ENCODE measurements at regions of chr10 and their contacts with region 1.

Region 1: GRCh38 chr10:119502209-119502608 is 40.3 kb downstream of the RGS10 start:
- DNase-seq: peak; percentile 64 to 97 (median 88)
- ATAC-seq: peak; percentile 82
- H3K4me3 ChIP-seq: peak overlapping the region; percentile 0 to 18
- H3K4me3 Mint-ChIP-seq: peak overlapping the region; percentile 79
- H3K27ac ChIP-seq: peak overlapping the region; percentile 73 to 77
- H3K27ac Mint-ChIP-seq: peak overlapping the region; percentile 99
- H3K4me1 ChIP-seq: peaks cover 94% of the 10 kb centered on the region
- H3K4me1 Mint-ChIP-seq: peaks cover 91% of the 10 kb centered on the region
- H3K27me3 ChIP-seq: no peaks in the 10 kb centered on the region
- H3K27me3 Mint-ChIP-seq: no peaks in the 10 kb centered on the region
- CTCF ChIP-seq: no peak

Region 2: DNA sequence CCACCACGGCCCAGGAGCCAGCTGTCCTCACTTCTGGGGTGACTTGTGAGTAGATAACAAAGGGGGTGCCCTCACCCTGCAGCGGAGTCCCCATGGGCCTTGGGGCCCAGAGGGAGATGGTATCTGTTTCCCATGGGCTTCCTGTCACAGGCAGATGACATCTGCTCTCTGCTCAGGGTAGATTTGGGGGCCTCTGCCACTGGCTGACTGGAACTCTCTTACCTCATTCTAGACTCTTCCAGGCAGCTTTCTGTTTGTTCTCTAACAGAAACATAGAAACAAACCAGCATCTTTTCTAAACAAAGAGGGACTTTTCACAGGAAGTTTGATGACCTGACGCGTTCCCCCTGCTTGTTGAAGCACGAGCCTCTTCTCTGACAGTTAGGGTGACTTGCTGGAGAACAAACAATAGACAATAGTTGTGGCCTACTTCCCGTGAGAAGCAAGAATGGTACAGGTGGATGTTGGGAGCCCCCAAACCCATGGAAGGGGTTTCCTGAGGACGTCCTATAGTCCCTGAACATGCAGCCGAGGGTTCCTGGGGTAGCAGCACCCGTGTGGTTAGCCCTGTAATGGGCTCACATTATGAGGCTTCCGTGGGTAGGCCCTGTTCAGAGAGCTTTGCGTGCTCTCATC is 233.2 kb before region 1 on chr10:
- CTCF ChIA-PET with region 1: no interaction called
- POLR2A ChIA-PET with region 1: no interaction called
- intact Hi-C with region 1: loop called in 1 of 2 experiments (anchors 5 kb)
- DNase-seq: peak; percentile 45 to 97 (median 75)
- ATAC-seq: peak; percentile 90
- H3K4me3 ChIP-seq: no peak overlapping the region
- H3K4me3 Mint-ChIP-seq: peak overlapping the region; percentile 33
- H3K27ac ChIP-seq: peak overlapping the region; percentile 68 to 100
- H3K27ac Mint-ChIP-seq: peak overlapping the region; percentile 97
- H3K4me1 ChIP-seq: peaks cover 42% of the 10 kb centered on the region
- H3K4me1 Mint-ChIP-seq: peaks cover 52% of the 10 kb centered on the region
- H3K27me3 ChIP-seq: no peaks in the 10 kb centered on the region
- H3K27me3 Mint-ChIP-seq: no peaks in the 10 kb centered on the region
- CTCF ChIP-seq: no peak

Region 3: GRCh38 chr10:119480667-119481066 is 21.5 kb before region 1 on chr10:
- CTCF ChIA-PET with region 1: no interaction called
- POLR2A ChIA-PET with region 1: no interaction called
- intact Hi-C with region 1: no loop called
- DNase-seq: no peak
- ATAC-seq: no peak
- H3K4me3 ChIP-seq: no peak overlapping the region
- H3K4me3 Mint-ChIP-seq: no peak overlapping the region
- H3K27ac ChIP-seq: no peak overlapping the region
- H3K27ac Mint-ChIP-seq: no peak overlapping the region
- H3K4me1 ChIP-seq: peaks cover 23% of the 10 kb centered on the region
- H3K4me1 Mint-ChIP-seq: peaks cover 27% of the 10 kb centered on the region
- H3K27me3 ChIP-seq: no peaks in the 10 kb centered on the region
- H3K27me3 Mint-ChIP-seq: no peaks in the 10 kb centered on the region
- CTCF ChIP-seq: no peak

Region 4: GRCh38 chr10:119517235-119518141 is 15.3 kb after region 1 on chr10:
- CTCF ChIA-PET with region 1: interaction called, 11 read pairs
- POLR2A ChIA-PET with region 1: interaction called, 12 read pairs
- intact Hi-C with region 1: loop called (anchors 1 kb)
- DNase-seq: peak in 6 of 9 experiments; percentile 57 to 74 (median 64)
- ATAC-seq: peak; percentile 24
- H3K4me3 ChIP-seq: peak overlapping the region; percentile 2 to 11
- H3K4me3 Mint-ChIP-seq: peak overlapping the region; percentile 76
- H3K27ac ChIP-seq: peak overlapping the region; percentile 25 to 83
- H3K27ac Mint-ChIP-seq: peak overlapping the region; percentile 93
- H3K4me1 ChIP-seq: peaks cover 70% of the 10 kb centered on the region
- H3K4me1 Mint-ChIP-seq: peaks cover 73% of the 10 kb centered on the region
- H3K27me3 ChIP-seq: no peaks in the 10 kb centered on the region
- H3K27me3 Mint-ChIP-seq: no peaks in the 10 kb centered on the region
- CTCF ChIP-seq: no peak